Activated CD4-positive, alpha-beta T cell treated with anti-CD3 and anti-CD28 coated beads, Interleukin-2, amount 10 ng/mL, durations not matched to agents 24 days and 14 days (primary cell): ENCODE measurements at regions of chr11 and their contacts with region 1.

Region 1: DNA sequence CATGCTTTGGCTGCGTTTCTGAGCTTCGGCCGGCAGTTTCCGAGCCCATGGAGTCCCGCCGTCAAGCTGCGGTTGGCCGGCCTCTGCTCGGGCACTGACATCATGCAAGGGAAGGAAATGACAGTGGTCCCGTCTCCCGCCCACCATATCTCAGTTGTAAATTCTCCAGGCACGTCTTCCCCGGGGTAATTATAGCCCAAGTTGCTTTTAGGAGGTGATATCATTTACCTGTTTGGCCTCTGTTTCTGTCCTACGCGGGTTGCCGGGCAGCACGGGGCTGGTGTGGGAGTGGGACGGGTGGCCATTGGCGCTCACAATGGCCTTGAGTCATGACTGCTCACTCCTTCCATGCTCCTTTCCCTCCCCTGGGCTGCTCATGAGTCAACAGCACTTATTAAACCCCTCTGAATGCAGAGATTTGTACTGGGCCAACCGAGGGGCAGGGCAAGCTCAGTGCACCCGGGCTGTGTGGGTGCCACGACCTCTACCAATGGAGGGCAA is 4.2 kb upstream of the ANO1 start:
- DNase-seq: no peak
- H3K4me3 Mint-ChIP-seq: no peak overlapping the region
- H3K27ac Mint-ChIP-seq: no peak overlapping the region
- H3K4me1 Mint-ChIP-seq: no peaks in the 10 kb centered on the region
- H3K27me3 Mint-ChIP-seq: peaks cover 62% of the 10 kb centered on the region

Region 2: DNA sequence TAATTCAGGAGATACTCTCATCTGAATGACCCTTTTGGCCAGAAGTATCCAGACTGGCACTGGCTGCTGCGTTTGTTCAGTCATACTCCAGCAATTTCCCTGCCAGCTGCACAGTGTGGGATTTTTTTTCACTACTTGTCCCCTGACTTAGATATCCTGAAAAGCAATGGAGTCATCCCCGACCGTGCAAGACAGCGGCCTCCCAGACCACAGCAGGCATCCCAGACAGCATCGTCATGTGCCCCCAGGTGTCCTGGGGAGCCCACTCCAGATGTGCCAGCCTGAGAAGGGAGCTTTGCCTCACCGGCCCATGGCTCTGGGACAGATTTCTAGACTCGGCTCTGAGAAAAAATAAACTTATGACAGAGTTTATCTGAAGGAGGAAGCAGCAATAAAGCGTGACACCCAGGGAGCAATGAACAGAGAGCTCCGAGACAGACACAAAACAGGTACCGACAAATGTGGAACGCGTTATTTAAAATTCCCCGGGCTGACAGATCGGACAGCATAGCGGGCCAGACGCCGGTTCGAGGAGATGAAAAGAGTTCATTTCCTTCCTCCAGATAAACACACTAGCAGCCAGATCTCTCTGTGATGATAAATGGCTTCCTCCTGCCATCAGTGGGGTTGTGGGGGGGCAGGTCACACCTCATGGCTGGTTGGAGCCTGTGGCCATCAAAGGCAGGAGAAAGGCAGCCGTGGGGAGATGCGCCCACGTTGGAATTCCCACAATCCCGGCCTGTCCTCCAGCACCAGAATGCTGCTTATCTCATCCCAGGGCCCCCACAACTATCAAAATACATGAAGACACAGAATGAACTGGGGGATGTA is 148.3 kb before region 1 on chr11:
- intact Hi-C with region 1: loop called (anchors 10 kb)
- DNase-seq: no peak
- H3K4me3 Mint-ChIP-seq: no peak overlapping the region
- H3K27ac Mint-ChIP-seq: no peak overlapping the region
- H3K4me1 Mint-ChIP-seq: peaks cover 5% of the 10 kb centered on the region
- H3K27me3 Mint-ChIP-seq: peaks cover 33% of the 10 kb centered on the region